ENCODE measurements at regions of chr4 and their contacts with region 1.

Region 1: DNA sequence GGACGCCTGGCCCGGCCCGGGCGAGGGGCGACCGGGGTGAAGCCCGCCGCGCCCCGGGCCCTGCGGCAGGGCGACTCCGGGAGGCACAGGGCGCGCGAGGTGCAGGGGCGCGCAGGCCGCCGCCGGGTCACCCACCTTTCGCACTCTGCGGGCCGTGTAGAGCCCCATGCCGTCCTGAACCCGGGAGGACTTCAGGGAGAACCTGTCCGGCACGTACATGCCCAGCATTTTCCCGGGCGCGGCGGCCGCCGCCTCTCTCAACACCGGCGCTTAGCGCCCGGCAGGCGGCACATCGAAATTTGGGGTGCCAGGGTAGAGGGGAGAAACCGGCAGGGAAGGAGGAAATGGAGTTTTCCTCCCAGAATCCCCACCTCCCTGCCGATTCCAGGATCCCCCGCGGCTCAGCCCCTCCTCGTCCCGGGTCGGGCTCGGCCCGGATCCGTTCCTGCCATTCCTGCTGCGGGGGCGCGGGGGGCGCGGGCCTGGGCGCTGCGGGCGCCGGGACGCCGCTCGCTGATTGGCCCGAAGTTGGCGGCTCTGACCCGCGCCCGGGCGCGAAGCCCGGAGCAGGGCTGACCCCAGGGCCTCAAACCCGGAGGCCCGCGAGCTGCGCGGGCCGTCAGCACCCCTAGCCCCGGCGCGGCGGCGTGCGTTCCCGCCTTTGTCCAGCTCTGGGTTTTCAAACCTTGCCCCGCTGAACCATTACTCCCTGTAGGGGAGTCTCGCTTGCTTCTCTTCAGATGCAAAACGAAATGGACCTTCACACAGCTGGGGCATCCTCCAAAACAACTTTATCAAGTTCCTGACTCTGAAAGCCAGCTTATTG is at the start of gene PRDM5:
- DNase-seq: peak in 1 of 2 donors; percentile 69
- H3K4me3 ChIP-seq: peak within 1 kb of the TSS; percentile 69 to 70
- H3K27ac ChIP-seq: peak within 1 kb of the TSS; percentile 94 to 98
- H3K4me1 ChIP-seq: peaks cover 0 to 12% of the 10 kb centered on the region in 2 donors
- H3K27me3 ChIP-seq: no peaks in the 10 kb centered on the region
- CTCF ChIP-seq: peak in 1 of 3 experiments; percentile 14
- total RNA-seq, gene PRDM5: 14.9 TPM

Region 2: DNA sequence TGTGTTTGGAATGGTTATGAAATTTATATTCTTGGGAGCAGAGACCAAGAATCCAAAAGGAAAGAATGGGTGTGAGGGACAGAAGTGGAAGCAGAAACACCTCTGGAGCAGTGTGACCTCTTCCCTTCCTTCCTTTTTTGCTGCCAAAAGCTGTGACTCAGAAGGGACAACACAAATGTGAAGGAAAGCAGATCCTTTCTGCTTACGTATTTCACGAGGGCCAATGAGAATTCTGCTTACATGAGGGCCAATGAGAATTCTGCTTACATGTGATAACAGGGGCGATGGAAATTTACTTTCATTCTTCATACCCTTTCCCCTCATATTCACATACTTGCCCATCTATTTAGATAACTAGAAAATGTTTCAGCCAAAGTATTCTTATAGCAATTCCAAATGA is 404.6 kb before region 1 on chr4:
- intact Hi-C with region 1: loop called (anchors 5 kb)
- DNase-seq: peak in 1 of 2 donors; percentile 73
- H3K4me3 ChIP-seq: peak overlapping the region; percentile 43 to 48
- H3K27ac ChIP-seq: peak overlapping the region; percentile 16 to 35
- H3K4me1 ChIP-seq: no peaks in the 10 kb centered on the region
- H3K27me3 ChIP-seq: no peaks in the 10 kb centered on the region
- CTCF ChIP-seq: no peak

Region 3: GRCh38 chr4:121072224-121073003 is 149.8 kb after region 1 on chr4 and contains the start of gene NDNF:
- intact Hi-C with region 1: loop called (anchors 5 kb)
- DNase-seq: no peak
- H3K4me3 ChIP-seq: peak within 1 kb of the TSS; percentile 64 to 86
- H3K27ac ChIP-seq: peak within 1 kb of the TSS in 1 of 2 donors; percentile 17
- H3K4me1 ChIP-seq: peaks cover 5 to 12% of the 10 kb centered on the region in 2 donors
- H3K27me3 ChIP-seq: no peaks in the 10 kb centered on the region
- CTCF ChIP-seq: no peak
- total RNA-seq, gene NDNF: 1.9 TPM

Measured in ascending aorta (tissue), 2 donors.